CD14-positive monocyte (primary cell): ENCODE measurements at regions of chr11 and their contacts with region 1.

Region 1: DNA sequence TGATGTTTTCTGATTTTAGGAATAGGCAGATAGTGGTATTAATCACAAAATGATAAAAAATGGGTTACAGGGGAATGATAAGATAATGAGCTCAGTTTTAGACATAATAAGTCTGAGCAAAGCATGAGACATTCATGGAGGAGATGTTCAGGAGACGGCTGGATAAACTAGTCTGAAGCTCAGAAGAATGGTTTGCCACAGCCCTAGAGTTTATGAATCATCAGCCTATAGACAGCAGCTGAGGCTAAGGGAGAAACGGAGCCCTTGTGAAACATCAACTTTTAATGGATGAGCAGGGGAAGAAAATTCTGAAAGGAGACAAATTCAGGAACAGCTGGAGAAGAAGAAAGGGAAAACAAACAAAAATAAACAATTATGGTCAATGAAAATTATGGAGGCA is 87.2 kb downstream of the RELT start:
- DNase-seq: peak; percentile 47 to 78 (median 70)
- H3K4me3 ChIP-seq: no peak overlapping the region
- H3K4me3 Mint-ChIP-seq: no peak overlapping the region
- H3K27ac ChIP-seq: peak overlapping the region; percentile 88 to 93
- H3K27ac Mint-ChIP-seq: peak overlapping the region; percentile 90 to 98 (median 98)
- H3K4me1 ChIP-seq: peaks cover 47 to 62% of the 10 kb centered on the region in 2 donors
- H3K4me1 Mint-ChIP-seq: peaks cover 64% of the 10 kb centered on the region
- H3K27me3 ChIP-seq: no peaks in the 10 kb centered on the region
- H3K27me3 Mint-ChIP-seq: no peaks in the 10 kb centered on the region
- CTCF ChIP-seq: no peak

Region 2: DNA sequence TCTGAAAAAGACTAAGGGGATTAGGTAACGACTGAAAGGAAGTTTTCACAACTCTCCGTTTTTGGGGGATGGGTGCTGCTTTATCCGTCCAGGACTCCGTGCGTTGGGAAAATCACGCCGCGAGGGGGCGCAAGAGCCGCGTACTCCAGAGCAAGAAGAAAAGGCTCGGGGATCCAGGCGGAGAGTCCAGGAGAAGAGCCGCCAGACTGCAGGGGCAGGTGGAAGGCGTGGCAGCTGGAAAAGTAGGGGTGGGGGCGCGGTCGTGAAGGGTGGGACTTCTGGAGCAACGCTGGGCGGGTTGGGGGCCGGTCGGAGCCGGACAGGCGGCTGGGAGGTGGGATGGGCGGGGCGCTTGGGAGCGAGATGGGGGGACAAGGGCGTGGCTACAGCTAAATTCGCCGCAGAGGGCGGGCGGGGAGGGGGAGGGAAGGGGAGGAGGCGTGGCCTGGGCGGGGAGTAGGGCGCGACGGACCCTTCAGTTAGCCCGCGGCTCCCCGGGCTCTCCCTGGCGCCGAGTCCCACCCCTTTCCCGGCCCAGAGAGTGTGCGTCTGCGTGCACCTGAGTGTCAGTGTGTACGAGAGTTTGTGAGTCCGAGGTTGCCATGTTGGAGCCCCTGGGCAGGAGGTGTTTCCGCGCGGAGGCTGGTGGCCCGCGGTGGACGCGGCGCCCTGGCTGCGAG is 155.9 kb before region 1 on chr11:
- intact Hi-C with region 1: no loop called
- DNase-seq: peak; percentile 89 to 93 (median 90)
- H3K4me3 ChIP-seq: peak overlapping the region; percentile 55 to 78 (median 73)
- H3K4me3 Mint-ChIP-seq: peak overlapping the region; percentile 80 to 94
- H3K27ac ChIP-seq: no peak overlapping the region
- H3K27ac Mint-ChIP-seq: peak overlapping the region; percentile 47 to 95 (median 83)
- H3K4me1 ChIP-seq: peaks cover 27 to 34% of the 10 kb centered on the region in 2 donors
- H3K4me1 Mint-ChIP-seq: peaks cover 20% of the 10 kb centered on the region
- H3K27me3 ChIP-seq: peaks cover 0 to 15% of the 10 kb centered on the region in 2 donors
- H3K27me3 Mint-ChIP-seq: peaks cover 13 to 31% (median 16%) of the 10 kb centered on the region in 3 donors
- CTCF ChIP-seq: peak; percentile 73

Region 3: DNA sequence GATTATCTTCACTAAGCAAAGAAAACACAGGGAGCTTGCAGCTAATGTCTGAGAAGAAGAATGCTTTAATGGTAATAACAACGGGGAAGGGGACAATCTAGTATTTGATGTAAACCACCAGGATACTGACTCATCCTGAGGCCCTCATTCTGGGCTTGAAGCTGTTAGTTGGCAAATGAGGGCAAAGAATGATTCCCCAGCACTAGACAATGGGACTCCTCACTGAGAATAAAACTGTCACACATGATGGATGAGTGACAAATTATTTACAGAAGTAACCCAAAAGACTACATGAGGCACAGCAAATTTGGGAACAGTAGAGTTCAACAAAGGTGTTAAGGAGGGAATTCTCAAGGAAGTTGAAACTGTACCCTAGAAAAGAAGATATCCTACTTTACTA is 58.3 kb after region 1 on chr11:
- intact Hi-C with region 1: no loop called
- DNase-seq: peak in 1 of 3 donors; percentile 7
- H3K4me3 ChIP-seq: no peak overlapping the region
- H3K4me3 Mint-ChIP-seq: no peak overlapping the region
- H3K27ac ChIP-seq: no peak overlapping the region
- H3K27ac Mint-ChIP-seq: no peak overlapping the region
- H3K4me1 ChIP-seq: peaks cover 0 to 4% of the 10 kb centered on the region in 2 donors
- H3K4me1 Mint-ChIP-seq: peaks cover 24% of the 10 kb centered on the region
- H3K27me3 ChIP-seq: no peaks in the 10 kb centered on the region
- H3K27me3 Mint-ChIP-seq: peaks cover 0 to 3% (median 0%) of the 10 kb centered on the region in 3 donors
- CTCF ChIP-seq: no peak

Region 4: GRCh38 chr11:73597956-73598718 is 134.8 kb after region 1 on chr11 and contains the start of gene FAM168A:
- intact Hi-C with region 1: loop called (anchors 5 to 10 kb)
- DNase-seq: peak; percentile 93 to 97 (median 94)
- H3K4me3 ChIP-seq: peak within 1 kb of the TSS; percentile 86 to 98 (median 97)
- H3K4me3 Mint-ChIP-seq: peak within 1 kb of the TSS; percentile 89 to 93
- H3K27ac ChIP-seq: peak within 1 kb of the TSS; percentile 57 to 88
- H3K27ac Mint-ChIP-seq: peak within 1 kb of the TSS; percentile 80 to 94 (median 92)
- H3K4me1 ChIP-seq: peaks cover 16 to 24% of the 10 kb centered on the region in 2 donors
- H3K4me1 Mint-ChIP-seq: peaks cover 33% of the 10 kb centered on the region
- H3K27me3 ChIP-seq: no peaks in the 10 kb centered on the region
- H3K27me3 Mint-ChIP-seq: peaks cover 0 to 2% (median 0%) of the 10 kb centered on the region in 3 donors
- CTCF ChIP-seq: peak; percentile 38
- polyA plus RNA-seq, gene FAM168A: 1.4 to 13.3 (median 2.1) TPM

Region 5: DNA sequence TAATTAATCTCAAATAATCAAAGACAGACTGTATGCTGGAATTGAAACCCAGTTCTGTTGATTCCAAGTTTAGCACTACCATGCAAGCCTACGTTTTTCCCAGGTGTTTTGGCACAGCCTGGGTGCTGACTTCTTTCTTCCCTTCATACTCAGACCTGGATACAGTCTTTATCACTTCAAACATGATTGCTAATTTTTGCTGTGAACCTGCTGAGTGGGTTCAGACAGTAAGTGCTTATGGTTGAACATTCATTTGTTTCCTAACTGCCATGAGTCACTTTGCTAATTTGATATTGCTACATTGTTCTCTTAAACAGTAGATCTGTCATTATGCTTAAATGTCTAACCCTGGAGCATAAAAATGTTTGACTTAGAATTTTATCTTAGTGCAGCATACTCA is 425.7 kb after region 1 on chr11:
- intact Hi-C with region 1: no loop called
- DNase-seq: no peak
- H3K4me3 ChIP-seq: no peak overlapping the region
- H3K4me3 Mint-ChIP-seq: no peak overlapping the region
- H3K27ac ChIP-seq: no peak overlapping the region
- H3K27ac Mint-ChIP-seq: no peak overlapping the region
- H3K4me1 ChIP-seq: no peaks in the 10 kb centered on the region
- H3K4me1 Mint-ChIP-seq: no peaks in the 10 kb centered on the region
- H3K27me3 ChIP-seq: no peaks in the 10 kb centered on the region
- H3K27me3 Mint-ChIP-seq: no peaks in the 10 kb centered on the region
- CTCF ChIP-seq: no peak